ENCODE measurements at regions of chr20 and their contacts with region 1.

Region 1: GRCh38 chr20:37333130-37333847 is 12.7 kb upstream of the SRC start:
- DNase-seq: no peak
- H3K4me3 ChIP-seq: no peak overlapping the region
- H3K27ac ChIP-seq: no peak overlapping the region
- H3K4me1 ChIP-seq: peaks cover 0 to 8% (median 2%) of the 10 kb centered on the region in 4 experiments; a peak in 3 of 7 replicates
- H3K27me3 ChIP-seq: no peaks in the 10 kb centered on the region
- CTCF ChIP-seq: no peak
- EP300 ChIP-seq: no peak
- POLR2A ChIP-seq: no peak
- RAD21 ChIP-seq: no peak

Region 2: GRCh38 chr20:37315452-37316110 is 17.7 kb before region 1 on chr20:
- CTCF ChIA-PET with region 1: interaction called, 12 read pairs
- POLR2A ChIA-PET with region 1: interaction called, 13 read pairs
- DNase-seq: no peak
- H3K4me3 ChIP-seq: no peak overlapping the region
- H3K27ac ChIP-seq: no peak overlapping the region
- H3K4me1 ChIP-seq: peaks cover 2 to 9% (median 7%) of the 10 kb centered on the region in 4 experiments; a peak in 5 of 7 replicates
- H3K27me3 ChIP-seq: no peaks in the 10 kb centered on the region
- CTCF ChIP-seq: no peak
- EP300 ChIP-seq: no peak
- POLR2A ChIP-seq: no peak
- RAD21 ChIP-seq: no peak